CD4-positive, alpha-beta T cell (primary cell): ENCODE measurements at regions of chr5 and their contacts with region 1.

Region 1: DNA sequence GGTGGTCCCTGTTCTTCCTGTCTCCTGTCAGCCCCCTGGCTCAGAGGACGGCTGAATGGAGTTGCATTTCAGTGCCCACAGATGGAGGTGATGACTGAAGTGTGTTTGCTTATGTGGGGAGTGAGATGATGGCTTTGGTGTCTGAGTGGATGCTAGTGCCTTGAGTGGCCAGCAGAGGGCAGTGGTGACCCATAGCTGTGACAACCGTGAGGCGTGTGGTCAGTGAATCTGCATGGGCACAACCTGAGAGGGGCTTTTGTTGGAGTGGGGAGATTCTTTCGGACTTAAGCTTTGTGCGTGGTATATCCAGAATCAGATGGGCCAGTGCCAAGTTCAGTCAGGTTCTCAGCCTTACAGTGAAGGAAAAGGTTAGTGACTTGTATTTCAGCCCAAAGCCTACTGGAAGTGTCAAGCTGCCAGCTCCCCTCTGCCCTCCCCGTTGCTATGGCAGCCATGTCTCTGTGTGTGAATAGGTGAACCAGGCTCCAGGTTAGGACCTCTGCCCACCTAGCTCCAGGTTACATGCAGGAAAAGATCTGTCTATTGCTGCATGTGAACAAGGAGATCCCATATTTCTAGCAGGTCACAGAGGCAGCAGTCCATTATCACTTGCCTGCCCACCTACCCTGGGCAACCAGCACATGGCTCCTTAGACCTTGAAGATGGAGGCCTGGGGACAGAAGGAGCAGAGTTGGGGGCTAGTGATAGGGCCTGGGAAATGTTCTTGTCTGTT is 14.7 kb upstream of the CXXC5 start:
- DNase-seq: peak; percentile 39 to 87 (median 54)
- ATAC-seq: peak; percentile 47
- H3K4me3 ChIP-seq: no peak overlapping the region
- H3K4me3 Mint-ChIP-seq: no peak overlapping the region
- H3K27ac ChIP-seq: no peak overlapping the region
- H3K27ac Mint-ChIP-seq: no peak overlapping the region
- H3K4me1 ChIP-seq: peaks cover 49% of the 10 kb centered on the region
- H3K4me1 Mint-ChIP-seq: peaks cover 37% of the 10 kb centered on the region
- H3K27me3 ChIP-seq: no peaks in the 10 kb centered on the region
- H3K27me3 Mint-ChIP-seq: no peaks in the 10 kb centered on the region
- CTCF ChIP-seq: peak; percentile 89

Region 2: DNA sequence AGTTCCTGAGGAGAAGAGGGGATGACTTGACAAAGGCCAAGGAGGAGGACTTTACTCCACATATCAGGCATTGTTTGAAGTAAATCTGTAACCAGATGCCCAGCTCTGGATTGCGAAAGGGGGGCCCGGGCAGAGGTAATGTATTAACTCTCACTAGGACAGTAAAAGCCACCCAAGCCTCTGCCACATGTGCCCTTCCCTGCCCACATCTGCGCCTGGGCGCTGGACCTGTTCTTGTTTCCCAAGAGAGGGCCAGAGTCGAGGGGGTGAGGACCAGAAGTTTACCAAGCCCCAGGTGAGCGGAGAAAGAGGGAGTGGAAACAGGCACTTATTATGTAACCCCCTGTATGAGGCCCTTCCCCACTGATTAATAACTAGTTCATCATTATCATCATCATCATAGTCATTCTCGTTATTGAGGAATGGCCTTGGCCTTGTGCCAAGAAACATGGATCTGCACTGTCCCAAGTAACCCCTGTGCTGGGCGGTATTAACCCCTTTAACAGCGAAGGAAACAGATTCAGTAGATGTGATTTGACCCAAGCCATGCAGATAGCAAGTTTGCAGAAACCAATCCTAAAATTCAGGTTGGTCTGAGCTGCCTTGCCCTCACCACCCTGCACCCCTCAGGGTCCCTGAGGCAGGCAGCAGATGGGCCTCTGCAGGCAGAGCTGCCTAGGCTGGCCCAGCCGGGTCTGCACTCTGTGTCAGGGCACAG is 250.0 kb before region 1 on chr5 and contains the start of gene SLC23A1:
- CTCF ChIA-PET with region 1: no interaction called
- POLR2A ChIA-PET with region 1: no interaction called
- intact Hi-C with region 1: no loop called
- DNase-seq: no peak
- ATAC-seq: no peak
- H3K4me3 ChIP-seq: no peak within 1 kb of the TSS
- H3K4me3 Mint-ChIP-seq: peak within 1 kb of the TSS; percentile 38
- H3K27ac ChIP-seq: peak within 1 kb of the TSS in 1 of 2 donors; percentile 71
- H3K27ac Mint-ChIP-seq: peak within 1 kb of the TSS; percentile 27
- H3K4me1 ChIP-seq: peaks cover 25% of the 10 kb centered on the region
- H3K4me1 Mint-ChIP-seq: peaks cover 27% of the 10 kb centered on the region
- H3K27me3 ChIP-seq: no peaks in the 10 kb centered on the region
- H3K27me3 Mint-ChIP-seq: no peaks in the 10 kb centered on the region
- CTCF ChIP-seq: no peak
- total RNA-seq, gene SLC23A1: not detected

Region 3: DNA sequence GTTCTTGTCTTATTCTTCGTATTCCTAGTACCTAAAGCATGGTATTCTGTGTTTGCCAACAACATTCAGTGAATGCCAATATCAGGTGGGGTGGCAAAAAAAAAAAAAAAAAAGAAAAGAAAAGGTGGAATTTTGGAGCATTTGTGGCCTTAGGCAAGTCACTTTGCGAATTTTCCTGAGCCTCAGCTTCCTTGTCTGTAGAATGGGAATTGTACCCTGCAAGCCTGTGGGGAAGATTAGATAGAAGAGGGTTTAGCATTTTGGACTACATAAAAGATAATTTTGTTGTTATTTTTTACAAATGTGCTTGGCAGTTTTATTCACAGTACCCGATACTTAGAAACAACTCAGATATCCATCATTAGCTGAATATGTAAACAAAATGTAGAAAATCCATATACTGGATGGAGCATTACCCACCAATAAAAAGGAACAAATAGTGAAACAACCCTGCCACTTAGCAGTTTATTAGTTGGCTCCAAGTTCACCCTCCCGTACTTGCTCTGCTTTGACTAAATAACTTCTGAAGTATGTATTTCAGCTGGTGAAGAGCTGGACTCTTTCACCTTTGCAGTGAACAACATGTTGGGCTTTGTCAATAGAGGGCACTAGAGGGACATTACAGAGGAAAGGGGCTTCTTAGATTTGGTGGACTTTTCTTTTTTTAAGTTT is 58.7 kb before region 1 on chr5:
- CTCF ChIA-PET with region 1: interaction called, 11 read pairs
- POLR2A ChIA-PET with region 1: interaction called, 5 read pairs
- intact Hi-C with region 1: loop called (anchors 5 to 10 kb)
- DNase-seq: peak in 4 of 14 experiments; percentile 28 to 73 (median 66)
- ATAC-seq: peak; percentile 37
- H3K4me3 ChIP-seq: no peak overlapping the region
- H3K4me3 Mint-ChIP-seq: peak overlapping the region; percentile 53
- H3K27ac ChIP-seq: no peak overlapping the region
- H3K27ac Mint-ChIP-seq: peak overlapping the region; percentile 92
- H3K4me1 ChIP-seq: peaks cover 62% of the 10 kb centered on the region
- H3K4me1 Mint-ChIP-seq: peaks cover 77% of the 10 kb centered on the region
- H3K27me3 ChIP-seq: no peaks in the 10 kb centered on the region
- H3K27me3 Mint-ChIP-seq: no peaks in the 10 kb centered on the region
- CTCF ChIP-seq: peak; percentile 79

Region 4: DNA sequence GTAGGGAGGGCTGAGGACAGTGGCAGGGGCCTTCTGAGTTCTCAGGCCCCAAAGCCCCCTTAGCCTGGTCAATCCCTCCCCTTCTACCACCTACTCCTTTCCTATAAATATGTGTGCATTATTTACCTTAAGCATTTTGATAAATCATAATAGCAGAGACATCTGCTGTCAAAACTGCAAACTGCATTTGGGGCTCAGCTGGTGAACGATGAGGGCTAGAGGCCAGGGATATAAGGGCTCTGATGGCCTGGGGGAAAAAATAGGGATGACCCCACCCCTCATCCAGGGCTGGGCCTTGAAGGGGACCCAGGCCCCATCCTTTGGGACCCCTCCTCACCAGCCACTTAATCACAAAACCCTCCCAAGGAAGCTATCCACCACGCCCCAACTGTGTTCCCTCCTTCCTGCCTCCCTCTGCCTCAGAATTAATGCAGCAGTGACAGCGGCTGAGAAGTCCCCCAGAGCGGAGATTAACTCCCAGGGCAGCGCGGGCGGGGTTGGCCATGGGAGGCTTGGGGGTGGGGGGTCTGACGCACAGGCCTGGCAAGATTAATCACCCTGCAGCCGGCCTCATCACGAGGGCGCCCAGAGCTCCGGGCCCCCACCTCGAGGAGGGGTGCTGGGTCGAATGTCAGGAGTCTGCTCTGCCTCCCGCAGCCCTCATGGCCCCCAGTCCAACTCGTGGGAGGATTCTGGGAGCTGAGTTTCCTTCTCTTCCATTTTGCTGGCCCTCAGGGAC is 56.8 kb after region 1 on chr5:
- CTCF ChIA-PET with region 1: interaction called, 19 read pairs
- POLR2A ChIA-PET with region 1: interaction called, 7 read pairs
- intact Hi-C with region 1: loop called (anchors 1 kb)
- DNase-seq: peak in 4 of 14 experiments; percentile 37 to 54 (median 46)
- ATAC-seq: peak; percentile 51
- H3K4me3 ChIP-seq: no peak overlapping the region
- H3K4me3 Mint-ChIP-seq: no peak overlapping the region
- H3K27ac ChIP-seq: no peak overlapping the region
- H3K27ac Mint-ChIP-seq: no peak overlapping the region
- H3K4me1 ChIP-seq: peaks cover 2% of the 10 kb centered on the region
- H3K4me1 Mint-ChIP-seq: no peaks in the 10 kb centered on the region
- H3K27me3 ChIP-seq: no peaks in the 10 kb centered on the region
- H3K27me3 Mint-ChIP-seq: no peaks in the 10 kb centered on the region
- CTCF ChIP-seq: peak; percentile 34

Region 5: DNA sequence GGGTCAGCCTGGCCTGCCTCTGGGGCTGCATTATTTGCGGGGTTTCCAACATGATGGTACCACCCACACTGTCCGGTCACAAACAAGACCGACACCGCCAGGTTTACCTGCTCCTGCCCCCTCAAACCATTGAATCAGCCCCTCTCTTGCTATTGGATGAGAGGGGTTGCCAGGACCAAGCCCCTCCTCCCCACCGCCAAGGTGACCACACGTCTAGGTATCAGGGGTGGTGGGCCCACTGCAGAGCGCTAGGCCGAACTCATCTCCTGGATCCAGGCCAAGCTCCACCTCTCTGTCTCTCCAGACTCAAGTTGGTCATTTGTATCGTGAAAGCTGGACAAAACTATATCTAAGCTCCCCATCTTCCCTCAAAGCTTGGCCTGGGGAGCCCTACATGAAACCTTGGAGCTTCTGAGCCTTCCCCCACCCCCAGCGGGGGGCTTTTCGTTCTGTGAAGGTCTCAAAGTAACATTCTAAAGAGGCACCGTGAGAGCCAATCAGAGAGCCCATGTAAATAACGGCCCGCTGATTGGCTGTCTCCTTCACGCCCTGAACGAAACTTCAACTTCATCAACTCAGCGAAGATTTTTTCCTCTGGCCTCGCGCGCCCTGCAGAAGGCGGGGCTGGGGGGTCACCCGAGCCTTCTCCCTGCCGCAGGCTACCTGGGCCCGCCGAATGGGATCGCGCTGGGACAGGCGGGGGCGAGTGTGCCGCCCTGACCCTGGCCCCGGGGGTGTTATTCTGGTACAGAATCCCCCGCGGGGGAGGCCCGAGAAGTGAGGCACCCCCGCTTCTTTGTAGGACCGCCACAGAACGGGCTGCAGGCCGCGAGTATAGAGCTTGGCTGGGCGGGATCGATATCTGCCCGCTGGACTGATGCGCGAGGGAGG is 112.6 kb after region 1 on chr5:
- CTCF ChIA-PET with region 1: interaction called, 3 read pairs
- POLR2A ChIA-PET with region 1: no interaction called
- intact Hi-C with region 1: loop called in 1 of 2 experiments (anchors 5 kb)
- DNase-seq: peak in 10 of 14 experiments; percentile 23 to 75 (median 44)
- ATAC-seq: peak; percentile 58
- H3K4me3 ChIP-seq: peak overlapping the region; percentile 67
- H3K4me3 Mint-ChIP-seq: peak overlapping the region; percentile 87
- H3K27ac ChIP-seq: no peak overlapping the region
- H3K27ac Mint-ChIP-seq: no peak overlapping the region
- H3K4me1 ChIP-seq: peaks cover 31% of the 10 kb centered on the region
- H3K4me1 Mint-ChIP-seq: peaks cover 22% of the 10 kb centered on the region
- H3K27me3 ChIP-seq: peaks cover 7 to 19% of the 10 kb centered on the region in 2 experiments
- H3K27me3 Mint-ChIP-seq: peaks cover 25% of the 10 kb centered on the region
- CTCF ChIP-seq: no peak

Region 6: GRCh38 chr5:139844472-139845145 is 211.1 kb after region 1 on chr5:
- CTCF ChIA-PET with region 1: no interaction called
- POLR2A ChIA-PET with region 1: no interaction called
- intact Hi-C with region 1: loop called in 1 of 2 experiments (anchors 10 kb)
- DNase-seq: peak; percentile 45 to 81 (median 66)
- ATAC-seq: no peak
- H3K4me3 ChIP-seq: no peak overlapping the region
- H3K4me3 Mint-ChIP-seq: peak overlapping the region; percentile 74
- H3K27ac ChIP-seq: no peak overlapping the region
- H3K27ac Mint-ChIP-seq: no peak overlapping the region
- H3K4me1 ChIP-seq: peaks cover 15% of the 10 kb centered on the region
- H3K4me1 Mint-ChIP-seq: peaks cover 17% of the 10 kb centered on the region
- H3K27me3 ChIP-seq: peaks cover 12 to 21% of the 10 kb centered on the region in 2 experiments
- H3K27me3 Mint-ChIP-seq: peaks cover 38% of the 10 kb centered on the region
- CTCF ChIP-seq: peak; percentile 70